ENCODE measurements at regions of chr2 and their contacts with region 1.

Region 1: GRCh38 chr2:25690058-25690457 is 16.7 kb upstream of the DTNB start:
- DNase-seq: peak in 1 of 10 donors; percentile 2
- H3K4me3 ChIP-seq: no peak overlapping the region
- H3K27ac ChIP-seq: no peak overlapping the region
- H3K27me3 ChIP-seq: no peaks in the 10 kb centered on the region
- CTCF ChIP-seq: no peak

Region 2: DNA sequence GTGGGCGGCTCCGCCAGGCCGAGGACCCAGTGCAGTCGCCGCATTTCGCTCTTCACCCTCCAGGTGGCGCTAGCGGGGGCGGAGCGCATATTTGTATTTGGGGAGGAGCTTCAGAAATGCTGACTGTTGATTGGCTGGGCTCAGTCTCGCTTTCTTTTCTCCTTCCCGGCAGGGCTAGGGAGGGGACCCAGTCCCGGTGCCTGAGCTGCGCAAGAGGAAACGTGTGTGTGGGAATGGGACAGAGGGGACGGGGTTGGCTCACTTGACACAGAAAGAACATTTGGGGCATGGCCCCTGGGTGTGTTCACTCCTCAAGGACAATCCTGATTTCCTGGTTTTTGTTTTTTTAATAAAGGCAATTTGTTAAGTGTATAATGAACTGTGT is 328.0 kb before region 1 on chr2:
- intact Hi-C with region 1: loop called in 1 of 2 experiments (anchors 10 kb)
- DNase-seq: peak; percentile 86 to 93 (median 90)
- H3K4me3 ChIP-seq: peak overlapping the region; percentile 35 to 74 (median 55)
- H3K27ac ChIP-seq: peak overlapping the region in 46 of 59 donors; percentile 4 to 80 (median 52)
- H3K27me3 ChIP-seq: no peaks in the 10 kb centered on the region
- CTCF ChIP-seq: peak; percentile 93 to 99 (median 98)

Region 3: GRCh38 chr2:25851740-25852503 is 161.9 kb after region 1 on chr2:
- intact Hi-C with region 1: no loop called
- DNase-seq: no peak
- H3K4me3 ChIP-seq: peak overlapping the region in 31 of 59 donors; percentile 2 to 47 (median 16)
- H3K27ac ChIP-seq: peak overlapping the region in 10 of 59 donors; percentile 5 to 57 (median 20)
- H3K27me3 ChIP-seq: no peaks in the 10 kb centered on the region
- CTCF ChIP-seq: peak; percentile 37 to 86 (median 76)

Measured in dorsolateral prefrontal cortex (tissue), 120 donors.